Panc1 (cell line): ENCODE measurements at regions of chr22 and their contacts with region 1.

Region 1: GRCh38 chr22:40436505-40437451 is 66.4 kb downstream of the SGSM3 start:
- DNase-seq: peak; percentile 36
- ATAC-seq: peak; percentile 72
- H3K4me3 ChIP-seq: no peak overlapping the region
- H3K27ac ChIP-seq: peak overlapping the region; percentile 71
- H3K4me1 ChIP-seq: peaks cover 22% of the 10 kb centered on the region
- H3K27me3 ChIP-seq: no peaks in the 10 kb centered on the region
- CTCF ChIP-seq: peak; percentile 69

Region 2: GRCh38 chr22:40396882-40397281 is 39.9 kb before region 1 on chr22:
- CTCF ChIA-PET with region 1: interaction called, 3 read pairs
- POLR2A ChIA-PET with region 1: interaction called, 17 read pairs
- in situ Hi-C with region 1: no loop called
- intact Hi-C with region 1: no loop called
- DNase-seq: no peak
- ATAC-seq: no peak
- H3K4me3 ChIP-seq: no peak overlapping the region
- H3K27ac ChIP-seq: no peak overlapping the region
- H3K4me1 ChIP-seq: no peaks in the 10 kb centered on the region
- H3K27me3 ChIP-seq: no peaks in the 10 kb centered on the region
- CTCF ChIP-seq: no peak

Region 3: GRCh38 chr22:40499187-40499753 is 62.5 kb after region 1 on chr22:
- CTCF ChIA-PET with region 1: no interaction called
- POLR2A ChIA-PET with region 1: no interaction called
- in situ Hi-C with region 1: no loop called
- intact Hi-C with region 1: no loop called
- DNase-seq: peak; percentile 85
- ATAC-seq: peak; percentile 92
- H3K4me3 ChIP-seq: no peak overlapping the region
- H3K27ac ChIP-seq: peak overlapping the region; percentile 90
- H3K4me1 ChIP-seq: peaks cover 33% of the 10 kb centered on the region
- H3K27me3 ChIP-seq: no peaks in the 10 kb centered on the region
- CTCF ChIP-seq: no peak

Region 4: GRCh38 chr22:40645579-40646197 is 208.9 kb after region 1 on chr22:
- CTCF ChIA-PET with region 1: interaction called, 4 read pairs
- POLR2A ChIA-PET with region 1: no interaction called
- in situ Hi-C with region 1: no loop called
- intact Hi-C with region 1: loop called (anchors 5 kb)
- DNase-seq: no peak
- ATAC-seq: no peak
- H3K4me3 ChIP-seq: no peak overlapping the region
- H3K27ac ChIP-seq: peak overlapping the region; percentile 70
- H3K4me1 ChIP-seq: peaks cover 8% of the 10 kb centered on the region
- H3K27me3 ChIP-seq: no peaks in the 10 kb centered on the region
- CTCF ChIP-seq: no peak